ENCODE measurements at regions of chr13 and their contacts with region 1.

Region 1: GRCh38 chr13:51412431-51412830 is 40.4 kb downstream of the INTS6 start:
- DNase-seq: no peak
- ATAC-seq: no peak
- H3K4me3 ChIP-seq: no peak overlapping the region
- H3K4me3 Mint-ChIP-seq: no peak overlapping the region
- H3K27ac ChIP-seq: no peak overlapping the region
- H3K27ac Mint-ChIP-seq: no peak overlapping the region
- H3K4me1 ChIP-seq: peaks cover 0 to 13% of the 10 kb centered on the region in 2 experiments
- H3K4me1 Mint-ChIP-seq: peaks cover 45 to 62% (median 56%) of the 10 kb centered on the region in 3 donors
- H3K27me3 ChIP-seq: no peaks in the 10 kb centered on the region
- H3K27me3 Mint-ChIP-seq: no peaks in the 10 kb centered on the region

Region 2: GRCh38 chr13:49443357-49443703 is 1969.1 kb before region 1 on chr13:
- CTCF ChIA-PET with region 1: no interaction called
- POLR2A ChIA-PET with region 1: interaction called in 1 of 2 experiments, 16 read pairs
- DNase-seq: peak in 5 of 35 experiments; percentile 1 to 49 (median 8)
- ATAC-seq: no peak
- H3K4me3 ChIP-seq: peak overlapping the region; percentile 84 to 92
- H3K4me3 Mint-ChIP-seq: peak overlapping the region; percentile 86 to 95 (median 93)
- H3K27ac ChIP-seq: peak overlapping the region; percentile 87
- H3K27ac Mint-ChIP-seq: peak overlapping the region; percentile 99
- H3K4me1 ChIP-seq: peaks cover 14 to 16% of the 10 kb centered on the region in 2 experiments
- H3K4me1 Mint-ChIP-seq: peaks cover 47 to 55% (median 50%) of the 10 kb centered on the region in 3 donors
- H3K27me3 ChIP-seq: no peaks in the 10 kb centered on the region
- H3K27me3 Mint-ChIP-seq: no peaks in the 10 kb centered on the region

Measured in T-cell (primary cell).